Endothelial cell of umbilical vein (primary cell): ENCODE measurements at regions of chr1 and their contacts with region 1.

Region 1: DNA sequence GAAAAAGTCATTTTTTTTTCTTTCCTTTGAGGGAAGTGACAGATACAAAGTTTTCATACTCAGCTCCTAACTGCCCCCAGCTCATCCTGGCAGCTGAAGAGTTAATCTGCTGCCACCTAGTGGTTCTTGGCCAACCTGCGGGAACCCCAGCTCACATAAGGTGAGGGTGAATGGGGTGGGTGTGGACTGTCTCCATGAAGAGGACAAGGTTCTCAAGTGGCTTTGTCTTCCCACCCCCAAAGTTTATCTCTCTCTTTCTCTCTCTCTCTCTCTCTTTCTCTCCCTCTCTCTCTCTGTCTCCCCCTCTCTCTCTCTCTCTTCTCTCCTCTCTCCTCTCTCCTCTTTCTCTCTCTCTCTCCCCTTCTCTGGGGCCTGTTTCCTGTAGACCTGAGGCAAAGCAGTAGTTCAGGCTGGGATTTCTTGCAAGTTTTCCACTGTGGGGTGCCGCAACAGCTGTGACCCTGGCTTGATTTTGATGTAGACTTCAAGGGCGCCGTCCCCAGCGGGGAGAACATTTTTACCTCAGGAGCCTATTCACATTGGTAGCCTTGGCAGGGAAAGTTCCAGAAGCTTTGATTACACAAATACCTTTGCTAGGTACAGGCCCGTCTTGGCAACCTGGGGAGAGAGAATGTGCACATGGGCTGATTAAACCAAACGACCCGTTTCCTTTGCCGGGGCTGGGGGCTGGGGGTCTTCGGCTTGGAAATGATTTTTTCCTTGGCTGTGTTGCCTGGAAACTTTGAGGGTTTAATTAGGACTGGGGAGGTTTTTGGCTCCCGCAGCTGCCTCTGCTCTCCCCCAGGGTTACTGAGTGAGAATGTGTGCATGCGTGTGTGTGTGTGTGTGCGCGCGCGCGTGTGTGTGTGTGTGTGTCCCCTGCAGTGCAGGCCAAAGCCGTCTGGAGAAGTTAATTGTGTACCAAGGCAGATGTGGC is 135.9 kb downstream of the TM2D1 start:
- DNase-seq: peak; percentile 69
- H3K4me3 ChIP-seq: no peak overlapping the region
- H3K27ac ChIP-seq: no peak overlapping the region
- H3K4me1 ChIP-seq: no peaks in the 10 kb centered on the region
- H3K27me3 ChIP-seq: peaks cover 0 to 2% of the 10 kb centered on the region in 2 experiments
- CTCF ChIP-seq: peak; percentile 83 to 86
- POLR2A ChIP-seq: no peak

Region 2: DNA sequence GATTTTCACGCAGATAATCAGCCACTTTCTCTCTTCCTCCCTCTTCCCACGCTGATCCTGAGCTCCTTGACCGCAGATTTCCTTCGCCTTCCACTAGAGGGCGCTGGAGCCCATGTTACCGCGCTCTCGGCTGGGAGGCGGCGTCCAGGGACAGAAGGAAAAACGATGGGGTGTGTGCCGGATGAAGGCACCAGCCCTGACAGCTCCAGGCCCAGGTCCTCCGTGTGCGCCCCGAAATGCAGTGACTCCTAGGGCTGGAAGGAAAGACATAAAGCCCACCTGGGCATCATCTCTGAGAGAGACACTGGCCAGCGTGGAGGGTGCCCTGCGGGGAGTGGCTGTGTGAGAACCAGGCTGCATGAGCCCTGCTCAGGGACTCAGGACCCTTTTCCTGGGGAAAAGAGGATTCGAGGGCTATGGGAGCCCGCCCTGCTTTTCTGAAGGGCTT is 1617.5 kb before region 1 on chr1:
- CTCF ChIA-PET with region 1: interaction called, 12 read pairs
- POLR2A ChIA-PET with region 1: no interaction called
- dilution Hi-C with region 1: no loop called
- intact Hi-C with region 1: loop called (anchors 10 kb)
- DNase-seq: peak; percentile 63
- H3K4me3 ChIP-seq: no peak overlapping the region
- H3K27ac ChIP-seq: no peak overlapping the region
- H3K4me1 ChIP-seq: peaks cover 2% of the 10 kb centered on the region
- H3K27me3 ChIP-seq: peaks cover 0 to 11% of the 10 kb centered on the region in 2 experiments
- CTCF ChIP-seq: peak; percentile 83 to 91
- POLR2A ChIP-seq: no peak

Region 3: DNA sequence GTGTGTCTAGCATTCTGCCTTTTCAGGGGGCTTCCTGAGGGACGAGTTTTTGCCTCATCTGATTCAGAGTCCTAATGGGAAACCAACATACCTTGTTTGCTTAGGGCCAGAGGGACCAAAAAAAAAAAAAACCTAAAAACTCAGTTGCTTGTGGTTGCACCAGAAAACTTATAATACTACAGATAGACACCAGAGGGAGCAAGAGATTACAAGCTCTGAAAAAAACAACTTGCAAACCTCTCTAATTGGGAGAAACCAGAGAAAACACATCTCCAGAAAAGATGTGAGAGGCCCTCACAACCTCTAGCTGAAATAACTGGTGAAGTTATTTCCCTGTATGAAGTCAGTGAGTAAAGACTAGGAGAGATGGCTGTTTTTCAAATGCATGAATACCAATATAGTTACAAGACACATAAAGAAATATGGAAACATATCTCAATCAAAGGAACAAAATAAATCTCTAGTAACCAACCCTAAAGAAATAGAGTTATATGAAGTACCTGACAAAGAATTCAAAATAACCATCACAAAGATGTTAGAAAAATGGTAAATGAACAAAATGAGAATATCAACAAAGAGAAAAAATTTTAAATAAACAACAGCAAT is 740.3 kb before region 1 on chr1:
- CTCF ChIA-PET with region 1: interaction called, 15 read pairs
- POLR2A ChIA-PET with region 1: interaction called, 5 read pairs
- dilution Hi-C with region 1: no loop called
- intact Hi-C with region 1: loop called (anchors 1 kb)
- DNase-seq: peak; percentile 79
- H3K4me3 ChIP-seq: no peak overlapping the region
- H3K27ac ChIP-seq: no peak overlapping the region
- H3K4me1 ChIP-seq: no peaks in the 10 kb centered on the region
- H3K27me3 ChIP-seq: no peaks in the 10 kb centered on the region
- CTCF ChIP-seq: peak; percentile 35 to 45
- POLR2A ChIP-seq: no peak

Region 4: GRCh38 chr1:60978421-60979357 is 610.3 kb before region 1 on chr1:
- CTCF ChIA-PET with region 1: interaction called, 32 read pairs
- POLR2A ChIA-PET with region 1: interaction called, 4 read pairs
- dilution Hi-C with region 1: no loop called
- intact Hi-C with region 1: loop called (anchors 1 kb)
- DNase-seq: peak; percentile 69
- H3K4me3 ChIP-seq: no peak overlapping the region
- H3K27ac ChIP-seq: no peak overlapping the region
- H3K4me1 ChIP-seq: peaks cover 6% of the 10 kb centered on the region
- H3K27me3 ChIP-seq: no peaks in the 10 kb centered on the region
- CTCF ChIP-seq: peak; percentile 60 to 77
- POLR2A ChIP-seq: no peak

Region 5: GRCh38 chr1:61202854-61203598 is 386.0 kb before region 1 on chr1:
- CTCF ChIA-PET with region 1: no interaction called
- POLR2A ChIA-PET with region 1: no interaction called
- dilution Hi-C with region 1: no loop called
- intact Hi-C with region 1: loop called (anchors 5 kb)
- DNase-seq: no peak
- H3K4me3 ChIP-seq: no peak overlapping the region
- H3K27ac ChIP-seq: no peak overlapping the region
- H3K4me1 ChIP-seq: peaks cover 14% of the 10 kb centered on the region
- H3K27me3 ChIP-seq: no peaks in the 10 kb centered on the region
- CTCF ChIP-seq: no peak
- POLR2A ChIP-seq: no peak

Region 6: GRCh38 chr1:61388566-61388965 is 200.4 kb before region 1 on chr1:
- CTCF ChIA-PET with region 1: no interaction called
- POLR2A ChIA-PET with region 1: no interaction called
- dilution Hi-C with region 1: no loop called
- intact Hi-C with region 1: no loop called
- DNase-seq: peak; percentile 92
- H3K4me3 ChIP-seq: no peak overlapping the region
- H3K27ac ChIP-seq: peak overlapping the region; percentile 71
- H3K4me1 ChIP-seq: peaks cover 23% of the 10 kb centered on the region
- H3K27me3 ChIP-seq: no peaks in the 10 kb centered on the region
- CTCF ChIP-seq: no peak
- POLR2A ChIP-seq: no peak

Region 7: GRCh38 chr1:61504852-61505390 is 84.1 kb before region 1 on chr1:
- CTCF ChIA-PET with region 1: no interaction called
- POLR2A ChIA-PET with region 1: no interaction called
- dilution Hi-C with region 1: no loop called
- intact Hi-C with region 1: no loop called
- DNase-seq: no peak
- H3K4me3 ChIP-seq: no peak overlapping the region
- H3K27ac ChIP-seq: no peak overlapping the region
- H3K4me1 ChIP-seq: no peaks in the 10 kb centered on the region
- H3K27me3 ChIP-seq: peaks cover under 1% of the 10 kb centered on the region in 2 experiments
- CTCF ChIP-seq: no peak
- POLR2A ChIP-seq: no peak

Region 8: DNA sequence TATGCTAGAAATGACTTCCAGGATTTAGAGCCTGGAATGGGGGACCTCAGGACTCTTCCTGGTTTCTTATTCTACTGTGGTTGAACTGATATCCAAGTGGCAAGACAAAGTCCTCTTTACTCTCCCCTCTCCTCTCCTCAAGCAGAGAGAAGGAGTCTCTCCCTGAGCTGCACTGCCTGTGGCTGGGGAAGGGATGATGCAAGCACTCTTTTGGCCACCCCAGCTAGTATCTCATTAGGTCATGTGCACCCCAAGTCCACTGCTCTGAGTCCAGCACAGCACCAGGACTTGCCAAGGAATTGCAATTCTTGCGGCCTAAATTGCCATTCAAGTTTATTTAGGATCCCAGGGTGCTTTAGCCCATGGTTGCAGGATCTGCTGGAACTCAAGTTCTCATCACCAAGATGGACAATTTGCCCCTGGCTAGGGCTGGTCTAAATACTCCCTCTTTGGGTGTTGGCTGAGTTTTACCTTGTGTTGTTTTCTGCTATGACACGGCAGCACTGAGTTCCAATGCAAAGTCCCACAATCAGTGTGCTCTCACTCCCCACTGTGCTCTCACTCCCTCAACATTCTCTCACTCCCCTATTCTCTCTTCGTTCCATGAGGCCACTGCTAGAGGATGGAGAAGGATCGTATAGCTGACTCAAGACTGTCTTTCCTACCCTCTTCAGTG is 36.2 kb before region 1 on chr1:
- CTCF ChIA-PET with region 1: no interaction called
- POLR2A ChIA-PET with region 1: no interaction called
- dilution Hi-C with region 1: no loop called
- intact Hi-C with region 1: no loop called
- DNase-seq: no peak
- H3K4me3 ChIP-seq: no peak overlapping the region
- H3K27ac ChIP-seq: no peak overlapping the region
- H3K4me1 ChIP-seq: no peaks in the 10 kb centered on the region
- H3K27me3 ChIP-seq: peaks cover 0 to 2% of the 10 kb centered on the region in 2 experiments
- CTCF ChIP-seq: no peak
- POLR2A ChIP-seq: no peak